Posterior cingulate gyrus (tissue), 11 donors: ENCODE measurements at regions of chr9 and their contacts with region 1.

Region 1: DNA sequence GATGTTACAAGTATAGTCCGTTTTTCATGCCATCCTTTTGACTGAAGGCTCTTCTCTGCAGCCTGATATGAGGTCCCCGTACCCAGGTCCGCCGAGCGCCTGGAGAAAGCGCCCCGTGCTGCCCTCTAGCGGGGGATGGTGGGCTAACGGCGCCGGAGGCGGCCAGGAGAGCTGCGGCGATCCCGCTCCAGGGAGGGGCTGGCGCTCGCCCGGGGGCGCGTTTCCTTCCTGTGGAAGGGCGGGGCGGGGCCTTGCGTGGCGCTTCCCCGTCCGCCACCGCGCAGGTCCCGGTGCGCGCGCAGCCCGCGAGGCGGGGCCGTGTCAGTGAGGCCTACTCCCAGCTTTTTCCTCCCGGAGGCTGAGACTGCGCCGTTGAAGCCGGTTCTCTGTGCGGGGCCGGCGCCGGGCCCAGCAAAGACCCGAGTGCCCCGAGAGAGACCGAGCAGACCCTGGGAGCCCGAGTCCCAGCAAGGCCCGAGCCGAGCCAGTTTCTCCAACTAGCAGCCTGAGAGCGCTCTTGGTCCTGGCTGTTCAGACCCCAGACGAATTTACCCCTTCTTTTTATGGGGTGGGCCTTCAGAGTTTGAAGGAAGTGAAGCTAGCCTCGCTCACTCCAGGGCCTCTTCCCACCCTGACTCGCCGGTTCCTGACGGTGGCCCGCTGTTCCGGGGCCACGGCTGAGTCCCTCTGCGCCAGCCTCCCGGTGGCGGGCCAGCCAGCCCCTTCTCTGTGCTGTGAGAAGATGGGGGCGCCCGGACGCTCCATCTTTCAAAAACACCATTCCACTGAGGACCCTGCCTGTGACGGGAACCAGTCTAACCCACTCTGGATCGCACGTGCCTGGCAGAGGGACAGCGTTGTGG is 9.7 kb upstream of the PHF2 start:
- DNase-seq: peak; percentile 98 to 100 (median 99)

Region 2: DNA sequence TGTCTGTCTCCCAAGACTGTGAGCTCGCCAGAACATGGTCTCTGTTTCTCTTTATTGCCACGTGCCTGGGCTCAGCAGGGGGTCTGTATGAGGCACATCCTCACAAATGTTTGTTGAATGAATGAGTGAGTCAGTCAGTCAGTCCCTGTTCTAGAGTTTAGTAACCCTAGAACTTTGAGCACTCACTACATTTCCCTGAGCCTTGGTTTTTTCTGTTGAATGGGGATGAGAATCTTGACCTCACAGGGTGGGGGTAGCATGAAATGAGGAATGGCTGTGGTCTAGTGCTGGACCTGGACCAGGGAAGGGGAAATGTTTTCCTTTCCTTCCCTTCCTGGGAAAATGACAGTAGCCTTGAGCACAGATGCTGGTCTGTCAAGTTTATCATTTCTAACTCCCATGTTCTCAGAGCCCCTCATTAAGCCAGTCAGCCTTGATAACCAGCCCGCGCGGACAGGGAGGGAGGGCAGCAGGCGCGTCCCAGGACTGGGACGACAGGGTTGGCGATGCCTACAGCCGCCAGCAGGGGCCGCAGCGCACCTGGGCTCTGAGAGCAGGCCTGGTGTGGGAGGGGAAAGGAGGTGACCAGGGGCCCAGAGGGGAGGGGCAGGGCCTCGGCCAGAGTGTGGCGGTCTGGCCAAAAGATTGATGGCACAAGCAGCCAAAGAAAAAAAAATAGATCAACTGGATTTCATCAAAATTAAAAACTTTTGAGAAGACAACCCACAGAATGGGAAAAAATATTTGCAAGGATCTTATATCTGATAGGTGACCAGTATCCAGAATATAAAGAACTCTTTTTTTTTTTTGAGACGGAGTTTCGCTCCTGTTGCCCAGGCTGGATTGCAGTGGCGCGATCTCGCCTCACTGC is 406.8 kb before region 1 on chr9:
- intact Hi-C with region 1: loop called (anchors 10 kb)
- DNase-seq: peak; percentile 63 to 97 (median 83)

Region 3: GRCh38 chr9:93207841-93208748 is 358.5 kb before region 1 on chr9:
- intact Hi-C with region 1: no loop called
- DNase-seq: peak in 5 of 10 donors; percentile 7 to 66 (median 19)

Region 4: DNA sequence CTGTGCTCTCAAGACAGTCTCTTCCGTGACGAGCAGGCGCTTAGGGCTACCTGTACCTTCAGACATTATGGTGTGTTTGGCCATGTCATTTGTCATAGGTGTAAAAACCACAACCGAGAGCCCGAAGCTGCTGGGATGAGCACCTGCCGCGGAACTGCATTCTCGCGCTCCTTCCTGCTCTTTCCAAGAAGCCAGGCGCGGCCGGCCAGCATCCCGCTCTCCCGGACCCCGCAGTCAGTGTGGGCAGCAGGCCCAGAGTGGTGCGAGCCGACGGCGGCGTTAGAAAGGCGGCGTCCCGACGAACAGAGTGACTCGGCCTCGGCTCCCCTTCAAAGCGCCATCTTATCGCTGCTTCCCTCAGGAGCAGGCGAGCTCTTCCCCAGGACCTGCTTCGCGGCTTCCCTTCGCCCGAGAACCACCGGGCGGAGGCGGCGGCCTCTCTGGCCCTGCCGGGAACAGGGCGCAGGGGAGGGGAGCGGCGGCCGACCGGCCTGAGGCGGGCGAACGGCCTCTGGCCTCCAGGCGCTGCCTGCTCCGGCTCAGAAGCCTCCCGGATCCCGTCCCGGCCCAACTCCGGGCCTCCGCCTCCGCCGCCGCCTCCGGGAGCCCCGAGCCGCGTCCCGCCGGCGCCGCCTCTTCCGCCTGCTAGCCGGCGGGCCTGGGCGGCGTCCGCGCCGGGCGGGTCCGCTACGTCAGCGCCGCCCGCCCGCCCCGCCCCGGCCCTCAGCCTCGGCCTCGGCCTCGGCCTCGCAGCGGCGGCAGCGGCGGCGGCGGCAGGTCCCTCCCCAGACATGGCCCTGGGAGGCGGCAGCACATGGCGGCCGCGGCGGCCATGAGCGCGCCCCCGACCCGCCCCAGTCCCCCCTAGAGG is 115.5 kb before region 1 on chr9 and contains the start of gene FAM120A:
- intact Hi-C with region 1: loop called (anchors 1 kb)
- DNase-seq: peak; percentile 43 to 94 (median 63)

Region 5: DNA sequence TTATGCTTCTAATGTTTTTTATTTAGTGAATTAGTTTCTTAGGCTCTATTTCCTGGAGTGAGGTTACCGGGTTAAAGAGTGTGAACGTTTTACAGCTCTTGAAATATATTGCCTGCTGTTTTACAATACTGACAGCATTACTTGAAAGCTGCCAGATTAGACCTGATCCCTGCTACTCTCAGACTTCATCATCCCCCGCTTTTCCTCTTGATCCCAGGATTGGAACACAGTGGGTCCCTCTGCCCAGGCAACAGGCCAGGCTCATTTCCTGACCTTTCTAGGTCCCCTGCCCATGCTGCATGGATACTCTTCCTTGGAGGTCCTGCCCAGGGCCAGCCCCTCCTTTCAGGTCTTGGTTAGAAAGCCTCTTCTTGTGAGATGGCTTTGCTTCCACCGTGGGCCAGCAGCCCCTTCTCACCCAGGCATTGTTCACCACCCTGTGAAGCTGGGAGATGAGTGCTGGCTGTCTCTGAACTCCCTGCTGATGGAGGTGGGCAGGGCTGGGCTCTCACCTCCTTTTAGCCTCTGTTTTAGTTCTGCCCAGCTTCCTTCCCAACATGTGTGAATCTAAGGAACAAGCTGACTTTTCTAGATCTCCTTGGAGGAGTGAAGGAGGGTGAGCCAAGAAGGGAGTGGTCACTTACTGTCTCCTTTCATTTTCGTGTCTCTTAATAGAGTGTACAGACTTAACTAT is 97.7 kb before region 1 on chr9:
- intact Hi-C with region 1: loop called (anchors 5 kb)
- DNase-seq: no peak

Region 6: DNA sequence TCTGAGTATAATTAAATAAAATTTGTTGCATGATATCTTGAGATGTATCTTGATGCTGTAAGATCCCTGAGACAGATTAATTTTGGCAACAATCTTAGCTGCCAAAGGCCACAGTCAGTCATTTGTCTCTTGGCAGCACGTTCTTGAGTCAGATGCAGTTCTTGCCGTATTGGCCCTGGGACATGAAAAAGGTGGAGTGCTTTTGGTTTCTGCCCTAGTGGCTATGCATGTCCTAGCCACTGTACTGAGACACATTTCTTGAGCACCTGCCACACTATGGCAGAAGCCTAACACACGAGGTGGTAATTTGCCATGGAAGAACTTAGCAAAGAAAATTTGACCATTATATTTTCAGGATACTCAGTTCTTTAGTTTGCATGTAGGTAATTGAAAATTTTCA is 35.3 kb before region 1 on chr9:
- intact Hi-C with region 1: no loop called
- DNase-seq: no peak